Mammary epithelial cell (primary cell): ENCODE measurements at regions of chr1 and their contacts with region 1.

Region 1: GRCh38 chr1:61588736-61589672 is 135.9 kb downstream of the TM2D1 start:
- DNase-seq: peak; percentile 63
- H3K4me3 ChIP-seq: no peak overlapping the region
- H3K27ac ChIP-seq: no peak overlapping the region
- H3K4me1 ChIP-seq: peaks cover 11% of the 10 kb centered on the region
- H3K27me3 ChIP-seq: no peaks in the 10 kb centered on the region
- CTCF ChIP-seq: peak; percentile 91 to 92

Region 2: GRCh38 chr1:60848583-60849188 is 740.3 kb before region 1 on chr1:
- CTCF ChIA-PET with region 1: no interaction called
- dilution Hi-C with region 1: no loop called
- in situ Hi-C with region 1: no loop called
- intact Hi-C with region 1: loop called (anchors 10 kb)
- DNase-seq: peak; percentile 20
- H3K4me3 ChIP-seq: no peak overlapping the region
- H3K27ac ChIP-seq: no peak overlapping the region
- H3K4me1 ChIP-seq: peaks cover 5% of the 10 kb centered on the region
- H3K27me3 ChIP-seq: no peaks in the 10 kb centered on the region
- CTCF ChIP-seq: peak; percentile 45 to 71

Region 3: DNA sequence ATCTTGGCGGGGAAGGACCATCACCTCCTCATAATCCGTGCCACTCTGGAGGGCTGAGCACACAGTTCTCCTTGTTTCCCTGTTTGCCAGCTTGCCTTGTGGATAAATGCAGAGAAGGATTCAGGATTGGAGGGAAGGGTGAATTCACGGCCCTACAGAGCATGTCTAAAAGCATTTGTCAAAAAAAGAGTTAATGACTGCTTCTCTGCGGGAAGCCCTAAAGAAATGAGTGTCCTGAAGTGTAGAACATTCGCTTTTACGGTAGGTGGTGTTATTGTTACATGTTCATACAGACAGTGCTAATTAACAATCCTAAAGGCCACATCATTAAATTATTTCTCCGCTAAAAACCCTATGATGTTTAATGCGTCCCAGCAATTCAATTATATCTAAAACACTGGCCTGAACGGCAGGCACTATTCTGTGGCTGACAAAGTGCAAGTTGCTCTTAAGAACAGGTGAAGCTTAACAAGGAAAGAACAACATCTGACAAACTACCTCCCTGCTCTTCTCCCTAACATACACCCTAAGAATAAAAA is 619.0 kb before region 1 on chr1:
- CTCF ChIA-PET with region 1: no interaction called
- dilution Hi-C with region 1: no loop called
- in situ Hi-C with region 1: loop called in 1 of 2 experiments (anchors 25 kb)
- intact Hi-C with region 1: loop called (anchors 1 kb)
- DNase-seq: peak; percentile 46
- H3K4me3 ChIP-seq: no peak overlapping the region
- H3K27ac ChIP-seq: no peak overlapping the region
- H3K4me1 ChIP-seq: peaks cover 33% of the 10 kb centered on the region
- H3K27me3 ChIP-seq: no peaks in the 10 kb centered on the region
- CTCF ChIP-seq: peak; percentile 47 to 52

Region 4: DNA sequence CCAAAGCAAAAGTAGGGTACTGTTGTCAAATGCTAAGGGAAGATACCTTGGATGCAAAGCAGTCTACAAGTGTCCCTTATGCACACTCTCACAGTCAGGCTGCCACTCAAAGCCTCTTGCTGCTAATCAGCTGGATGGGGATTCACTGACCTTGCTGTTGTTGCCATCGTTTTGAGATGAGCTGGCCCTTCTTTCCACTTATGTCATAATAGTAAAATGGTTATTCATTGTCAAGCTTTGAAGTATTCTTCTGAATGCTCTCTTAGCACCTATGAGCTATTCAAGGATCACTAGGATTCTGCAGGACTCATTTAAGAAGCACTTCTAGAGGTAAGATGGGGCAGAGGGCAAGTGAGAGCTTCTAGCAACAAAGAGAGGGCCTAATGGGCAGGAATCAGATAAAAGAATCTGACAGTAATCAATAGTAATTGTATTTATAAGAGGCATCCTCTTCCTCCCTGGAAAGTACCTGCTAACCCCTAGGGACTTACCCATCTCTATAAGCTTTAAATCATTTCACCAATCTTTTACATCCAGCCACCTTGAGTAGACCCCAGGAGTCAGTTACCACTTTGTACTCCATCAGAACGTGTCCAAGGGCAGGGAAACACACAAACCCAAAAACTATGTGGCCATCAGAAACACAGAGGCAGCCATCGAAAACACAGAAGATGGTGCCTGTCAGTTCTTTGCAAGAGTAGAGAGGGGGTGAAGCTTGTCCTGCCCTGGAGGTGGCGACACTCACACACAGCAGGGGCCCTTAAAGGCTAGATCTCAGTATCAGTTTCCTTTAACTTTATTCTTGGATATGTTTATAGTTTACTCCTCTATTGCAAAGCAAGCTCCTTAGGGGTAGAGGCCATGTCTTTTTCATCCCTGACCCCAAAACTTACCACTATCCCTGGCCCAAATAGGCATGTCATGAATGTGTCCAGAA is 610.3 kb before region 1 on chr1:
- CTCF ChIA-PET with region 1: no interaction called
- dilution Hi-C with region 1: no loop called
- in situ Hi-C with region 1: loop called in 1 of 2 experiments (anchors 25 kb)
- intact Hi-C with region 1: loop called (anchors 1 kb)
- DNase-seq: peak; percentile 38
- H3K4me3 ChIP-seq: no peak overlapping the region
- H3K27ac ChIP-seq: no peak overlapping the region
- H3K4me1 ChIP-seq: peaks cover 4% of the 10 kb centered on the region
- H3K27me3 ChIP-seq: no peaks in the 10 kb centered on the region
- CTCF ChIP-seq: peak; percentile 89 to 90

Region 5: DNA sequence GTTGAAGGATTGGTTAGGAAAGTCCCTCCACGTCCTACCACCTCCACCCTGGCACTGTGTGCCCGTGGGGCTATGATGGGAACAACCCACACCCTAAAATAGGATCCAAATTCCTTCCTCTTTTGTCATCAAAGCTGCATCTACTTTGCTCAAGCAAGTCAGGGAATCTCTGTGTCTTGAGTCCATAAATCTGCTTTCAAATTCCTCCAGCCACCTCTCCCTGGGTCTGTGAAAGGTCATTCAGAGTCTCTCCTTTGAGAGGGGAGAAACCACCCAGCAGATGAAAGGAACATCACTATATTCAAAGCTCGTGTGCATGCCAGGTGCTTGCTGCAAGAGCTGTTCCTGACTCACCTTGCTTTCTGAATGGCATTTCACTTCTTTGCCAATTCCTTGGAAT is 107.7 kb before region 1 on chr1:
- CTCF ChIA-PET with region 1: interaction called, 4 read pairs
- dilution Hi-C with region 1: no loop called
- in situ Hi-C with region 1: no loop called
- intact Hi-C with region 1: loop called (anchors 10 kb)
- DNase-seq: peak; percentile 88
- H3K4me3 ChIP-seq: no peak overlapping the region
- H3K27ac ChIP-seq: peak overlapping the region; percentile 81
- H3K4me1 ChIP-seq: peaks cover 23% of the 10 kb centered on the region
- H3K27me3 ChIP-seq: no peaks in the 10 kb centered on the region
- CTCF ChIP-seq: no peak

Region 6: DNA sequence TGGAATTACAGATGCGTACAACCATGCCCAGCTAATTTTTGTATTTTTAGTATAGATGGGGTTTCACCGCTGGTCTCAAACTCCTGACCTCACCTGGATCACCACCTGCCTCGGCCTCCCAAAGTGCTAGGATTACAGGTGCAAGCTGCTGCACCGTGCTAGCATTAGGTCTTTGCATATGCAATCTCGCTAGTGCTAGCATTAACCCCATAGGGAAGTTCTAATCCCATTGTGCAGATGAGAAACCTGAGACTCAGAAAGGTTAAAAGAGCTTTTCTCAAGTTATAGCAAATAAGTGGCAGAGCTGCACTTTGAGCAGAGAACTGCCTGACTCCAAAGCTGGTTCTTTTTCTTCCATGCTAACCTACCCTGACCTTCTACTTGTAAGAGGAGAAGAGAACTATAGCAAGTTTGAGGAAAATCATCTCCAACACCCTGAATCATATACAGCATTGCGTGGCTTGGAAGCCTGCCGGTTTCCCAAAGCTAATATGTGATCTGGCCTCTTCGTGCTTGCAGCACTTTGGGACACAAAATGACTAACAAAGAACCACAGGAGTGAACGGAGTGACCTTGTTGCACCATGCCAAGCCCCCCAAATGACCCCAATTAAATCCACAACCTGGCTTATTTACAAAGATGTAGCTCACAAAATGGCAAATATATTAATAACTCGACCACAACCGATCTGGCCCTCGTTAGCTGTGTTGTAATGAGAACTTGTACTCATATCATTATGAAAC is 49.1 kb before region 1 on chr1:
- CTCF ChIA-PET with region 1: no interaction called
- dilution Hi-C with region 1: no loop called
- in situ Hi-C with region 1: no loop called
- intact Hi-C with region 1: no loop called
- DNase-seq: peak; percentile 10
- H3K4me3 ChIP-seq: no peak overlapping the region
- H3K27ac ChIP-seq: no peak overlapping the region
- H3K4me1 ChIP-seq: no peaks in the 10 kb centered on the region
- H3K27me3 ChIP-seq: no peaks in the 10 kb centered on the region
- CTCF ChIP-seq: no peak

Region 7: GRCh38 chr1:61620536-61620935 is 31.5 kb after region 1 on chr1:
- CTCF ChIA-PET with region 1: no interaction called
- dilution Hi-C with region 1: no loop called
- in situ Hi-C with region 1: no loop called
- intact Hi-C with region 1: no loop called
- DNase-seq: no peak
- H3K4me3 ChIP-seq: no peak overlapping the region
- H3K27ac ChIP-seq: no peak overlapping the region
- H3K4me1 ChIP-seq: peaks cover 8% of the 10 kb centered on the region
- H3K27me3 ChIP-seq: no peaks in the 10 kb centered on the region
- CTCF ChIP-seq: no peak

Region 8: GRCh38 chr1:61851849-61852669 is 263.1 kb after region 1 on chr1:
- CTCF ChIA-PET with region 1: interaction called, 3 read pairs
- dilution Hi-C with region 1: no loop called
- in situ Hi-C with region 1: no loop called
- intact Hi-C with region 1: loop called (anchors 1 kb)
- DNase-seq: peak; percentile 31
- H3K4me3 ChIP-seq: no peak overlapping the region
- H3K27ac ChIP-seq: no peak overlapping the region
- H3K4me1 ChIP-seq: no peaks in the 10 kb centered on the region
- H3K27me3 ChIP-seq: no peaks in the 10 kb centered on the region
- CTCF ChIP-seq: peak; percentile 68 to 78